ENCODE measurements at regions of chr18 and their contacts with region 1.

Region 1: GRCh38 chr18:57561728-57562423 is 24.6 kb downstream of the FECH start:
- DNase-seq: peak; percentile 16
- H3K4me3 Mint-ChIP-seq: no peak overlapping the region
- H3K27ac Mint-ChIP-seq: no peak overlapping the region
- H3K4me1 Mint-ChIP-seq: no peaks in the 10 kb centered on the region
- H3K27me3 Mint-ChIP-seq: no peaks in the 10 kb centered on the region

Region 2: DNA sequence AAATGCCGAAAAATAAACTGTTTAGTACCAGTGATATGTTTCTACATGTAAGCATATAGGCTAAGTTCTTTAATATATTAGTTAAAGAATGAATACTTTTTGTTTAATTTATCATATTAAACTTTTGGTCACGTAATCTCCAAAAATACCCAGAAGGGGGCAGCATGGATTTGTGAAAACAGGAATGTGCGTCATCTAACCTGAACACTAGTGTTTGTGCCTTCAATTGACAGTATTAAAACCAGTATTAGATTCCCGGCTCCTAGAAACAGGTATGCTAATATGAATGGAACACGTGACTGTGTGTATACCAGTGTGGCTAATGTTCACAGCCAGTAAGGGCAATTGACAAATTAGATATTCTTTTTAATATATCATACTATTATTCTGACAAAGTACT is 858.9 kb before region 1 on chr18:
- CTCF ChIA-PET with region 1: interaction called, 3 read pairs
- intact Hi-C with region 1: loop called (anchors 1 kb)
- DNase-seq: peak; percentile 29
- H3K4me3 Mint-ChIP-seq: no peak overlapping the region
- H3K27ac Mint-ChIP-seq: no peak overlapping the region
- H3K4me1 Mint-ChIP-seq: no peaks in the 10 kb centered on the region
- H3K27me3 Mint-ChIP-seq: no peaks in the 10 kb centered on the region

Region 3: DNA sequence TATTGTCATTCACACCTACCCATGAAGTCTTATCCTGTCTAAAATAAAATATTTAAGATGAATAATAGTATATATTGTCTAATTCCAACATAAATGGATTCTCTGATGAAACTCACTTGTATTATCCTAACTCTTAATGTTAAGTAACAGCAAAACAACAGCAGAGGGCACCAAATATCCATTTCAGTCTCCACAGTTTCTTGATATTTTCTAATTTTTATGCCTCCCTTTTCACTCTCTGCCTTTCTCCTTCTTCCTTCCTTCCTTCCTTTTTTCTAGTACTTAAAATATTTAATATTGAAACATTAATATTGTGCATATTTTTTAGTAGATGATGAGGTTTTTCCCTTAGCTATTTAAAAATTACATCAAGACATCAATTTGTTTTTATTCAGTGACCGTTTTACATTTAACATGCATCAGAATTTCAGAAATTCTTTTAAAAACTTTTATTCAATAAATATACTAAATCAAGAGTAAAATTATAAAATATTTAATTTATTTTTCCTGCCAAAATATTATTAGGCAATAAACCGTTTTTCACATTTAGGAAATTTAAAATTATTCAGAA is 813.1 kb before region 1 on chr18:
- CTCF ChIA-PET with region 1: interaction called, 4 read pairs
- intact Hi-C with region 1: loop called (anchors 1 kb)
- DNase-seq: peak; percentile 10
- H3K4me3 Mint-ChIP-seq: no peak overlapping the region
- H3K27ac Mint-ChIP-seq: no peak overlapping the region
- H3K4me1 Mint-ChIP-seq: peaks cover 16% of the 10 kb centered on the region
- H3K27me3 Mint-ChIP-seq: no peaks in the 10 kb centered on the region

Region 4: DNA sequence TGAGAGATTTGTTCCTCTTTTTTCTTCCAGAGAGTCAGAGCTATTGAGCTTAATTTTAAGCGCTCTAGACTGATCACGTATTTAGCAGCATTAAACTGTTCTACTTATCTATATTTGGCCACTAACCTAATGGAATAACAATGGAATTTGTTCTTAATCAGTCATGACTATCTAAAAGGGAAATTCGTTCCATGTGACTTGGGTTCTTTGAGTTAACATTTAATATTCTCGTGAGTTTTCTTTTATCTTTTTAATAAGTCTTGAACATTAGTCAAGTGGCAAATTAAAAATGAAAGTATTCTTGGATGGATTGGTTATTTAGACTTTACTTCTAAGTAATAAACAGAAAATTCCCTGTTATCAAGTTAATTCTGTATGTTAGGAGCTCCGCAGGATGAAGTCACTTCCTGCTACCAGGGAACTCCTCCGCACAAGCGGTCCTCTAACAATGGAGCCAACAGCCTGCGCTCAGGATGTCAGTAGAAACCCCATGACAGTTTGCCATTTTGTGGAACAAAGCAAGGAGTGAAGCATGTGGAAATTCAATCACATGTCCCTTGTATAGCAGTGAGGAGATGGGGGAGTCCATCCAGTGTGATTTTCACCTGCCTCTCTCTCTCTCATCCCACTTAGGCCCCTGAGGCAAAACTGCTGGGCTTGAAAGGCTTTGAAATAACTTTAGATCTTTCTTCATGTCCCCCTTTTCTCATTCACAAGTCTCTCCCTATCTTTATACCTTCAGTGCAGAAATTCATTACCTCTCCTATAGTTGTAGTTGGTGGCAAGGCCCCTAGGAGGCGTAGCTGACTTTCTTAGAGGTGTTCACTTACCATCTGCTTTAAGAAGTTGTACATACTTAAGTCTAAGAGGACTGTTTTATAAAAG is 772.6 kb before region 1 on chr18:
- CTCF ChIA-PET with region 1: interaction called, 4 read pairs
- intact Hi-C with region 1: loop called (anchors 2 kb)
- DNase-seq: peak; percentile 58
- H3K4me3 Mint-ChIP-seq: no peak overlapping the region
- H3K27ac Mint-ChIP-seq: no peak overlapping the region
- H3K4me1 Mint-ChIP-seq: no peaks in the 10 kb centered on the region
- H3K27me3 Mint-ChIP-seq: no peaks in the 10 kb centered on the region

Region 5: GRCh38 chr18:56869189-56869777 is 692.6 kb before region 1 on chr18:
- CTCF ChIA-PET with region 1: interaction called, 3 read pairs
- intact Hi-C with region 1: loop called (anchors 1 kb)
- DNase-seq: peak; percentile 17
- H3K4me3 Mint-ChIP-seq: no peak overlapping the region
- H3K27ac Mint-ChIP-seq: no peak overlapping the region
- H3K4me1 Mint-ChIP-seq: peaks cover 15% of the 10 kb centered on the region
- H3K27me3 Mint-ChIP-seq: no peaks in the 10 kb centered on the region

Region 6: DNA sequence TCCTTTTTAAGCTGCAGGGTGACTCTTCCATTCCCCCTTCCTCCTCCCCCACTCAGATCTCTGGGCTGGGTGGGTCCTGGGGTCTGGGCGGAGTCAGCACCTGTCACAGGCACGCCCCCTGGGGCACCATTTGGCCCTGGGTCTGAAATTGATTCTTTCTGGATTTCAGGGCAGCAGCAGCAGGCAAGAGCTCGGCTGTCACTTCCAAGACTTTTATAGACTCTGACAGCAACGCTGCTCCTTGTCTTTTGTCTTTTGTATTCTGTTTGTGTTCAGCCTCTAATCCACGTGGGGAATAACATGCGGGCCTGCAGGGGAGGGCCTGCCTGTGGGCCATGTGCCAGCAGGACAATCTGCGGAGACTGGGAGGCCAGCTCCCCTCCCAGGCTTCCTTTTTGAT is 411.0 kb before region 1 on chr18:
- CTCF ChIA-PET with region 1: no interaction called
- intact Hi-C with region 1: no loop called
- DNase-seq: no peak
- H3K4me3 Mint-ChIP-seq: no peak overlapping the region
- H3K27ac Mint-ChIP-seq: no peak overlapping the region
- H3K4me1 Mint-ChIP-seq: no peaks in the 10 kb centered on the region
- H3K27me3 Mint-ChIP-seq: peaks cover 25% of the 10 kb centered on the region

Region 7: GRCh38 chr18:57547260-57547659 is 14.6 kb before region 1 on chr18:
- CTCF ChIA-PET with region 1: interaction called, 10 read pairs
- intact Hi-C with region 1: no loop called
- DNase-seq: no peak
- H3K4me3 Mint-ChIP-seq: no peak overlapping the region
- H3K27ac Mint-ChIP-seq: no peak overlapping the region
- H3K4me1 Mint-ChIP-seq: peaks cover 14% of the 10 kb centered on the region
- H3K27me3 Mint-ChIP-seq: no peaks in the 10 kb centered on the region

Measured in activated naive CD4-positive, alpha-beta T cell treated with anti-CD3 and anti-CD28 coated beads for 36 hours (primary cell).